ENCODE measurements at regions of chr4 and their contacts with region 1.

Region 1: DNA sequence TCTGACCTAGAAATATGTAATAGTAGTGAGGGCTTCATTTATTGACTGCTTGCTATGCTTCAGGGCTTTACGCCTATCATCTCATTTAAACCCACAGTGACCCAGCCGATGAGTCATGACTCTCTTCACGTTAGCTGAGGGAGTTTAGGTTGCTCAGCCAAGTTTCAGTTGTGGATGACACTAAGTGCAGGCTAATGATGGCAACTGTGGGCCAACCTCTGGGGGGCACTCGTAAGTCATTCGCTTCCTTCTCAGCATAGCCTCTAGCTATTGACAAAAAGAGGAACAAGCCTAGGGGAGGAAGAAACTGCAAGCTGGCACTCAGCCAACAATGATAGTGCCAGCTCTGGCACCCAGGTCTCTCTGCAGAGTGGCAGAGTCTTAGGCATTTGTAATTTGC is 325.0 kb downstream of the ARHGAP10 start:
- DNase-seq: peak in 1 of 2 donors; percentile 74
- ATAC-seq: peak in 1 of 2 donors; percentile 42
- H3K4me3 ChIP-seq: no peak overlapping the region
- H3K27ac ChIP-seq: peak overlapping the region; percentile 64 to 84 (median 79)
- H3K4me1 ChIP-seq: peaks cover 89 to 90% of the 10 kb centered on the region in 2 donors
- H3K27me3 ChIP-seq: no peaks in the 10 kb centered on the region
- CTCF ChIP-seq: no peak
- POLR2A ChIP-seq: no peak

Region 2: GRCh38 chr4:147182041-147182440 is 874.8 kb before region 1 on chr4:
- in situ Hi-C with region 1: no loop called
- intact Hi-C with region 1: no loop called
- DNase-seq: no peak
- ATAC-seq: no peak
- H3K4me3 ChIP-seq: no peak overlapping the region
- H3K27ac ChIP-seq: no peak overlapping the region
- H3K4me1 ChIP-seq: no peaks in the 10 kb centered on the region
- H3K27me3 ChIP-seq: no peaks in the 10 kb centered on the region
- CTCF ChIP-seq: no peak
- POLR2A ChIP-seq: no peak

Region 3: GRCh38 chr4:147984065-147984777 is 72.6 kb before region 1 on chr4:
- in situ Hi-C with region 1: loop called in 1 of 4 experiments (anchors 10 kb)
- intact Hi-C with region 1: no loop called
- DNase-seq: peak; percentile 11 to 51
- ATAC-seq: peak; percentile 79 to 88
- H3K4me3 ChIP-seq: no peak overlapping the region
- H3K27ac ChIP-seq: peak overlapping the region; percentile 53 to 75 (median 57)
- H3K4me1 ChIP-seq: peaks cover 31 to 39% of the 10 kb centered on the region in 2 donors
- H3K27me3 ChIP-seq: no peaks in the 10 kb centered on the region
- CTCF ChIP-seq: peak; percentile 59 to 80 (median 71)
- POLR2A ChIP-seq: no peak

Region 4: DNA sequence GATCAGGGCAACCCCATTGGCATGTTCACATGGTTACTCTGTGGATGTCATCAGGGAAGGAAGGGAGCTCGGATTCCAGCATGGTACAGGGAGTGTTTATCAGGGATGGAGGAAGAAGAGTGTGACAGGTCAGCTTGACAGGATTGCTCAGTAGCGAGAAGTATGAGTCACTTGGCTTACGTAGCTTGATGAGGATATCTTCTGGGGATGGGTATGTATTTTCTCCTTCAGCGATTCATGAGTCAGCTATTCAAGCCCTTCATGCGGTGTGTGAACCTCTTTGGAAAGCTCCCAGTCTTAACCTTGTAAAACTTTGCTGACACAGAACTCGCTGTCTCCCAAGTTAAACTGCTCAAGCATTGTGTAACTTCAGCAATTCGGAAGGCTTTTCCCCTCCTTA is 49.6 kb before region 1 on chr4:
- in situ Hi-C with region 1: loop called in 1 of 4 experiments (anchors 5 kb)
- intact Hi-C with region 1: loop called (anchors 1 kb)
- DNase-seq: peak; percentile 82 to 83
- ATAC-seq: peak; percentile 96 to 99
- H3K4me3 ChIP-seq: peak overlapping the region in 1 of 4 donors; percentile 10
- H3K27ac ChIP-seq: peak overlapping the region; percentile 74 to 88 (median 76)
- H3K4me1 ChIP-seq: peaks cover 45 to 52% of the 10 kb centered on the region in 2 donors
- H3K27me3 ChIP-seq: no peaks in the 10 kb centered on the region
- CTCF ChIP-seq: no peak
- POLR2A ChIP-seq: no peak

Region 5: DNA sequence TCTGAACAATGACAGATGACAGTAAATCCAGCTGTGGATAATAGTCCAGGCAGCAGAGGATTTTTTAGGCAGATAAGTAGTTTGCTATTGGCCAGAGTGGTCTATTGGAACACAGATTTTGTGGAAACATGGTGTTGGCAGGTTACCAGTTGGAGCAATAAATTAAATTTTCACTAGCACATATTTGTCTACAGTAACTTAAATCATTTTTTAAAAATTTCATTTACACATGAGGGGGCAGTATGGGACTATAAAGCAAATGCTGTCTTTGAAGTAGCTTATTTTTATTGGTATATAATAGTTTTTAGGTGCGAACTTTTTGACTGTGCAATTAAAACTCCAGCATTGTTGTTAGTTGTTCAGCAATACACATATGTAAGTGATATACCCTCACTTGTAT is 35.2 kb before region 1 on chr4:
- in situ Hi-C with region 1: no loop called
- intact Hi-C with region 1: loop called (anchors 5 kb)
- DNase-seq: no peak
- ATAC-seq: no peak
- H3K4me3 ChIP-seq: no peak overlapping the region
- H3K27ac ChIP-seq: peak overlapping the region in 3 of 4 donors; percentile 76 to 80 (median 77)
- H3K4me1 ChIP-seq: peaks cover 65 to 76% of the 10 kb centered on the region in 2 donors
- H3K27me3 ChIP-seq: no peaks in the 10 kb centered on the region
- CTCF ChIP-seq: peak in 2 of 5 experiments; percentile 23 to 34
- POLR2A ChIP-seq: no peak

Region 6: GRCh38 chr4:148216866-148217814 is 160.3 kb after region 1 on chr4:
- in situ Hi-C with region 1: no loop called
- intact Hi-C with region 1: loop called (anchors 10 kb)
- DNase-seq: no peak
- ATAC-seq: no peak
- H3K4me3 ChIP-seq: peak overlapping the region; percentile 27 to 58 (median 34)
- H3K27ac ChIP-seq: peak overlapping the region; percentile 28 to 63 (median 42)
- H3K4me1 ChIP-seq: peaks cover 27 to 37% of the 10 kb centered on the region in 2 donors
- H3K27me3 ChIP-seq: no peaks in the 10 kb centered on the region
- CTCF ChIP-seq: no peak
- POLR2A ChIP-seq: no peak

Measured in gastrocnemius medialis (tissue), 4 donors.